Activated CD4-positive, alpha-beta memory T cell treated with anti-CD3 and anti-CD28 coated beads for 36 hours (primary cell): ENCODE measurements at regions of chr10 and their contacts with region 1.

Region 1: GRCh38 chr10:21495752-21496342 is 29.6 kb downstream of the SKIDA1 start:
- DNase-seq: peak; percentile 90
- H3K4me3 Mint-ChIP-seq: peak overlapping the region; percentile 71
- H3K27ac Mint-ChIP-seq: no peak overlapping the region
- H3K4me1 Mint-ChIP-seq: peaks cover 12% of the 10 kb centered on the region
- H3K27me3 Mint-ChIP-seq: peaks cover 48% of the 10 kb centered on the region

Region 2: DNA sequence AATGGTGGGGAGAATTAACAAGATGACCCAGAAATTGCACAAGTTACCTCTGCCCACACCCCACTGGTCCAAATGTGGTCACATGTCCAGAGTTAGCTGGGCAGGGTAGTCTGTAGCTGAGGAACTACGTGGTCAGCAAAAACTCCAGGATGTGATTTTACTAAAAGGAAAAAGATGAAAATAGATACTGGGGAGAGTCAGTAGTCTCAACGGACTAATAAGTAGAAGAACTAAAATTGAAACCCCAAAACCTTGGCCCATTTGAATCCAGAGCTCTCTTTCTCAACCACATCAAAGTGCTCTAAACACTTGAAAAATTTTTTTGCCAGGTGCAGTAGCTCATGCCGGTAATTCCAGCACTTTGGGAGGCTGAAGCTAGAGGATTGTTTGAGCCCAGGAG is 116.7 kb before region 1 on chr10:
- CTCF ChIA-PET with region 1: no interaction called
- POLR2A ChIA-PET with region 1: no interaction called
- intact Hi-C with region 1: no loop called
- DNase-seq: no peak
- H3K4me3 Mint-ChIP-seq: no peak overlapping the region
- H3K27ac Mint-ChIP-seq: no peak overlapping the region
- H3K4me1 Mint-ChIP-seq: peaks cover 2% of the 10 kb centered on the region
- H3K27me3 Mint-ChIP-seq: no peaks in the 10 kb centered on the region

Region 3: DNA sequence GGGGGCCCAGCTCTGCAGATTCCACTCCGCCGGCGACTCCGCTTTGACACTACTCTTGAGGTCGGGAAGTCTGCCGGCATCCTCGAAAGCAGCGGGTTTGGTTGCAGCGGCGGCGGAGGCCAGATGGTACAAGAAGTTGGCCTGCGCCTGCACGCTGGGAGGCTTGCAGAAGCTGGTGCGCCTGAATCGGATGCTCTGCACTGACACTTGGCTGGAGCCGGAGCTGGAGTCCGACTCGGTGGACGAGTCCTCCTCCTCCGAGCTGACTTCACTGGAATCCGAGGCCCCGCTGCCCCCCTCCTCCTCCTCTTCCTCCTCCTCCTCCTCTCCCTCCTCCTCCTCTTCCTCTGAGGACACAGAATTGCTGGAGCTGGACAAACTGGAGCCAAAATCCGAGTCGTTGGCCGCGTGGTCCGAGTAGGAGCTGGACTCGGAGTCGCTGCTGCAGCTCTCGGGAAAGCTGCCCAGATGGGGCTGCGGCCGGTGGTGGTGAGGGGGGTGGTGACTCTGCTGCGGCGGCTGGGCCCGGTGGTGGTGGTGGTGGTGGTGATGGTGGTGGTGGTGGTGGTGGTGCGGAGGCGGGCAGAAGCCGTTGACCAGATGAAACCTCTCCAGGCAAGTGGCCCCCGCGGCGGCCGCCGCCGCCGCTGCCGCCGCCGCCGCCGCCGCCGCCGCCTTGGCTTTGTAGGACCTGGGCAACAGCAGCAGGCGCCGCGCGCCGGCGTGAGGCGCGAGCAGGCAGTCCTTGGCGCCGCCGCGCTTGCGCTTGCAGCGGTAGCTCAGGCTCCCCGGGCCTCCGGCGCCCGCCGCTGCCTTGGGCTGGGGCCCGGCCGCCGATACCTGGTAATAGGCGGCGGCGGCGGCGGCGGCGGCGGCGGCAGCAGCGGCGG is 20.6 kb after region 1 on chr10:
- CTCF ChIA-PET with region 1: interaction called, 21 read pairs
- POLR2A ChIA-PET with region 1: interaction called, 3 read pairs
- intact Hi-C with region 1: loop called (anchors 1 kb)
- DNase-seq: peak; percentile 60
- H3K4me3 Mint-ChIP-seq: peak overlapping the region; percentile 84
- H3K27ac Mint-ChIP-seq: no peak overlapping the region
- H3K4me1 Mint-ChIP-seq: peaks cover 34% of the 10 kb centered on the region
- H3K27me3 Mint-ChIP-seq: peaks cover 73% of the 10 kb centered on the region

Region 4: GRCh38 chr10:21533467-21534279 is 37.8 kb after region 1 on chr10 and contains the start of gene MLLT10:
- CTCF ChIA-PET with region 1: interaction called, 5 read pairs
- POLR2A ChIA-PET with region 1: no interaction called
- intact Hi-C with region 1: loop called (anchors 2 kb)
- DNase-seq: peak; percentile 94
- H3K4me3 Mint-ChIP-seq: peak within 1 kb of the TSS; percentile 87
- H3K27ac Mint-ChIP-seq: peak within 1 kb of the TSS; percentile 96
- H3K4me1 Mint-ChIP-seq: peaks cover 27% of the 10 kb centered on the region
- H3K27me3 Mint-ChIP-seq: no peaks in the 10 kb centered on the region
- total RNA-seq, gene MLLT10: 32.8 to 35.4 TPM

Region 5: GRCh38 chr10:21732067-21732772 is 236.4 kb after region 1 on chr10:
- CTCF ChIA-PET with region 1: interaction called, 43 read pairs
- POLR2A ChIA-PET with region 1: no interaction called
- intact Hi-C with region 1: loop called (anchors 1 kb)
- DNase-seq: peak; percentile 59
- H3K4me3 Mint-ChIP-seq: no peak overlapping the region
- H3K27ac Mint-ChIP-seq: no peak overlapping the region
- H3K4me1 Mint-ChIP-seq: peaks cover 25% of the 10 kb centered on the region
- H3K27me3 Mint-ChIP-seq: no peaks in the 10 kb centered on the region

Region 6: GRCh38 chr10:22228943-22229801 is 733.3 kb after region 1 on chr10:
- CTCF ChIA-PET with region 1: no interaction called
- POLR2A ChIA-PET with region 1: no interaction called
- intact Hi-C with region 1: loop called (anchors 2 kb)
- DNase-seq: peak; percentile 90
- H3K4me3 Mint-ChIP-seq: peak overlapping the region; percentile 77
- H3K27ac Mint-ChIP-seq: peak overlapping the region; percentile 96
- H3K4me1 Mint-ChIP-seq: peaks cover 16% of the 10 kb centered on the region
- H3K27me3 Mint-ChIP-seq: peaks cover 4% of the 10 kb centered on the region